ENCODE measurements at regions of chr19 and their contacts with region 1.

Region 1: DNA sequence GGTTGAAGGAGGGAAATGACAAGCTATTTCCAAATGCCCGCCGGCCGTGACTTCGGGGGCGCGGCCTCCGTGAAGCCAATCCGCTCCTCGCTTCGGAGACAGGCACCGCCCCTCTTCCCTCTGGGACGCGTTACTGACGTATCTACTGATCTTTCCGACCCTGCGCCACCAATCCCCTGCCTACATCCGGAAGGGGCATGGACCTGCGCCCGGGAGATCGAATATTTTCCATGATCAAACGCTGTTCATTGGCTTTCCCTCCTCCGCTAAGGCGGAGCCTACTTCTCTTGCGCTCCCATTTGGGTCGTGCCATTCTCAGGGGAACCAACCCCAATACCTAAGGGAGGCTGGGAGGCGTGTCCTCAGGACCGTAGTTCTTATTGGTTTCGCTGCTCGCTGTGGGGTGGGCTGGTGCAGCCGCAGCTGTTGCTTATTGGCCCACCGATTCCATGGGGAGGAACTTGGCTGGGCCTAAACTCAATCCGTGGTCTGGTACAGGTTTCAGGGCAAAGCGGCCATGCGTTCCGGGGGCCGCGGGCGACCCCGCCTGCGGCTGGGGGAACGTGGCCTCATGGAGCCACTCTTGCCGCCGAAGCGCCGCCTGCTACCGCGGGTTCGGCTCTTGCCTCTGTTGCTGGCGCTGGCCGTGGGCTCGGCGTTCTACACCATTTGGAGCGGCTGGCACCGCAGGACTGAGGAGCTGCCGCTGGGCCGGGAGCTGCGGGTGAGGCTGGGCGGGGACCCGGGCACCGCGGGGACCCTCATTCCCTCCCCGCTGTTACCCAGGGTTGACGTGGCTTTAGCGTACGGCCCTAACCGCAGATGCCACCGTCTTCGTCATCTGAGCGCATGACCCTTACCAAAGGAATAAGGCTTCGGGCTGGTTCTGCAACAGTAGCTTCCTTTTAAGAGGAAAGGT is at the start of gene QPCTL:
- DNase-seq: peak; percentile 99
- ATAC-seq: peak; percentile 92
- H3K4me3 Mint-ChIP-seq: peak within 1 kb of the TSS; percentile 89
- H3K27ac Mint-ChIP-seq: peak within 1 kb of the TSS; percentile 97
- H3K4me1 Mint-ChIP-seq: peaks cover 21% of the 10 kb centered on the region
- H3K27me3 Mint-ChIP-seq: no peaks in the 10 kb centered on the region
- total RNA-seq, gene QPCTL: 17.3 to 18.7 TPM

Region 2: GRCh38 chr19:45092747-45093678 is 599.4 kb before region 1 on chr19 and contains the start of gene PPP1R37:
- CTCF ChIA-PET with region 1: no interaction called
- POLR2A ChIA-PET with region 1: no interaction called
- intact Hi-C with region 1: loop called in 1 of 2 experiments (anchors 2 kb)
- DNase-seq: peak; percentile 95
- ATAC-seq: peak; percentile 71
- H3K4me3 Mint-ChIP-seq: peak within 1 kb of the TSS; percentile 89
- H3K27ac Mint-ChIP-seq: peak within 1 kb of the TSS; percentile 97
- H3K4me1 Mint-ChIP-seq: peaks cover 54% of the 10 kb centered on the region
- H3K27me3 Mint-ChIP-seq: no peaks in the 10 kb centered on the region
- total RNA-seq, gene PPP1R37: 12.5 to 14.1 TPM

Region 3: DNA sequence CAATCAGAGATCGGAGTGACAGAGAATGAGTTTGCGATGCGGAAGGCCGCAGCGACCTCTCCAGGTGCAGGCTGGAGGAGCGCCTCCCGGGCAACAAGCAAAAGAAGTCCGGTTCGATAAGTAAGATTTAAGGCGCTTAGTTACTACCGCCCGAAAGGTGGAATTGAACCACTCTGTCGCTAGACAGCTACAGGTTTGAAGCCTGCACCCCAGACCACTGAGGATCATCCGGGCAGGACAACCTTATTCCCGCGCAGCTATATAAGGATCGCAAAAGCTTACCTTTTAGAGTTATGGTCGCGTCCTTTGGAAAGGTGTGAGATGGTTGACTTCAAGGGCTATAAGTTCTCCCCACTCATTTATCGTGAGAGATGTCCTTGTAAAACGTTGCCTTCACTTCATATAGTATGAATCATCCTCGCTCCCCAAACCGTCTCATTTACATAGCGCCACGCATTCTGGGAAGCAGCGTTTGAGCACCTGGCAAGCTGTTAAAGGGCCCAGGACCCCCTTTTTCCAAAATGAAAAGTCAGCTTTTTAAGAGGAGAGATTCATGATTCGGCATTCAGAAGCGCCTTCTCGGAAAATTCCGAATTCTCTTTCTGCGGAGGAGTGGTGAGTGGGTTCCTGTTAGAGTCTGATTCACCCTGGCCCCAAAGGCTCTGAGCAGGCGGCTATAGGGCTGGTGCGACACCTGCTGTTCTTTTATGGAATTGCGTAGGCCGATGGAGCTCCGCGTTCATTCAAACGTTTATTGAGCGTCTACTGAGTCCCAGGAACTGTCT is 213.8 kb before region 1 on chr19:
- CTCF ChIA-PET with region 1: interaction called, 10 read pairs
- POLR2A ChIA-PET with region 1: no interaction called
- intact Hi-C with region 1: no loop called
- DNase-seq: peak; percentile 95
- ATAC-seq: peak; percentile 86
- H3K4me3 Mint-ChIP-seq: peak overlapping the region; percentile 60
- H3K27ac Mint-ChIP-seq: peak overlapping the region; percentile 73
- H3K4me1 Mint-ChIP-seq: peaks cover 24% of the 10 kb centered on the region
- H3K27me3 Mint-ChIP-seq: peaks cover 4% of the 10 kb centered on the region

Region 4: DNA sequence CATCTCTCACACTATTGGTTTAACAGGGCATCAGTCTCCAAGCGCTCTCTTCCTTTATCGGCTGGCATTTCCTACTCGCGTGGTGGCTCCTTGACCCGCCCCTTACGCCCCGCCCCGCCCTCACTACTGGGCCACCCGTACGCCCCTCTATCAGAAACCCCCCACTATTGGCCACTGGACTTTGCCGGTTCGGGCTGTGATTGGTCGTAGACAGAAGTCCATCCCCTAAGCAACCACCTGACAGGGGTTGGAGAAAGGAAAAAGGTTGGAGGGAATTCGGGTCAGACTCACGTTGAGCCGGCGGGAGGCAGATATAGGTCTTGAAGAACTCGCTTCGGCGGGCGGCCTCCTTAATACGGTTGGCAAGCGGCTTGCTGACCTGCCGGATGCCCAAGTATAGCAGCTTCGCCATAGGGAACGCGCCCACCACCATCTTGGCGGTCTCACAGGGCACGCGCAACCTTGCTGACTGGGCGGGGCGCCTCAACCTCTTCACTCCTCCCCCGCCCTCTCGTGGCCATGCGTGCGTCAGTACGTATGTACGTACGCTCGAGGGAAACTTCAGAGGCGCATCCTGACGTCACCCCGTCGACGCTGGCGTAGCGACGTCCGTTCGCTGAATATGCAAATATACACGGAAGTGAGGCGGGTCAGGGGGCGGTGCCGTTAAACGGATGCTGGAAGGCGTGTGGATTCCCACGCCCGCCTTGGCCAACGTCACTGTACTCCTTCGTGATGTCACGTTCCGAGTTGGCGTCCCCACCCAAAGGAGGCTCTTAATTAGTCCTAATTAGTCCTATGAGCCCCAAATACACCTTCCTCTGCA is 107.9 kb before region 1 on chr19 and contains the start of gene OPA3:
- CTCF ChIA-PET with region 1: interaction called, 13 read pairs
- POLR2A ChIA-PET with region 1: no interaction called
- intact Hi-C with region 1: loop called (anchors 1 kb)
- DNase-seq: peak; percentile 100
- ATAC-seq: peak; percentile 95
- H3K4me3 Mint-ChIP-seq: peak within 1 kb of the TSS; percentile 87
- H3K27ac Mint-ChIP-seq: peak within 1 kb of the TSS; percentile 93
- H3K4me1 Mint-ChIP-seq: peaks cover 22% of the 10 kb centered on the region
- H3K27me3 Mint-ChIP-seq: peaks cover 2% of the 10 kb centered on the region
- total RNA-seq, gene OPA3: 13.8 to 14.4 TPM

Region 5: GRCh38 chr19:45717166-45717982 is 24.9 kb after region 1 on chr19:
- CTCF ChIA-PET with region 1: interaction called, 75 read pairs
- POLR2A ChIA-PET with region 1: interaction called, 25 read pairs
- intact Hi-C with region 1: loop called (anchors 1 kb)
- DNase-seq: peak; percentile 99
- ATAC-seq: peak; percentile 97
- H3K4me3 Mint-ChIP-seq: peak overlapping the region; percentile 93
- H3K27ac Mint-ChIP-seq: peak overlapping the region; percentile 94
- H3K4me1 Mint-ChIP-seq: peaks cover 40% of the 10 kb centered on the region
- H3K27me3 Mint-ChIP-seq: no peaks in the 10 kb centered on the region

Region 6: GRCh38 chr19:45886427-45887199 is 194.2 kb after region 1 on chr19:
- CTCF ChIA-PET with region 1: interaction called, 3 read pairs
- POLR2A ChIA-PET with region 1: no interaction called
- intact Hi-C with region 1: loop called in 1 of 2 experiments (anchors 1 kb)
- DNase-seq: peak; percentile 96
- ATAC-seq: peak; percentile 85
- H3K4me3 Mint-ChIP-seq: peak overlapping the region; percentile 85
- H3K27ac Mint-ChIP-seq: peak overlapping the region; percentile 95
- H3K4me1 Mint-ChIP-seq: peaks cover 17% of the 10 kb centered on the region
- H3K27me3 Mint-ChIP-seq: no peaks in the 10 kb centered on the region

Measured in activated CD4-positive, alpha-beta T cell treated with anti-CD3 and anti-CD28 coated beads for 36 hours (primary cell).